ENCODE measurements at regions of chr20 and their contacts with region 1.

Region 1: DNA sequence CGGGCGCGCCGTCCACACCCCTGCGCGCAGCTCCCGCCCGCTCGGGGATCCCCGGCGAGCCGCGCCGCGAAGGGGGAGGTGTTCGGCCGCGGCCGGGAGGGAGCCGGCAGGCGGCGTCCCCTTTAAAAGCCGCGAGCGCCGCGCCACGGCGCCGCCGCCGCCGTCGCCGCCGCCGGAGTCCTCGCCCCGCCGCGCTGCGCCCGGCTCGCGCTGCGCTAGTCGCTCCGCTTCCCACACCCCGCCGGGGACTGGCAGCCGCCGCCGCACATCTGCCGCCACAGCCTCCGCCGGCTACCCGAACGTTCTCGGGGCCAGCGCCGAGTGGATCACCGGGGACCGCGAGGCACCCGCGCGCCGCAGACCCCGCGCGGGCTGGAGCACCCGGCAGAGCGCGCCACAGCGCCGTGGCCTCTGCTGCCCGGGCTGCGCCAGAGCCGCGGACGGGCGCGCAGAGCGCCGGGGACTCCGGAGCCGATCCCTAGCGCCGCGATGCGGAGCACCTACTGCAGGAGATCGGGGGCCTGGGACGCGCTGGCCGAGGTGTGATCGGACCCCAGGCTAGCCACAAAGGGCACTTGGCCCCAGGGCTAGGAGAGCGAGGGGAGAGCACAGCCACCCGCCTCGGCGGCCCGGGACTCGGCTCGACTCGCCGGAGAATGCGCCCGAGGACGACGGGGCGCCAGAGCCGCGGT is at the start of gene BMP2:
- DNase-seq: peak; percentile 69
- H3K4me3 ChIP-seq: peak within 1 kb of the TSS; percentile 78 to 93 (median 78)
- H3K27ac ChIP-seq: peak within 1 kb of the TSS; percentile 56
- H3K4me1 ChIP-seq: peaks cover 11% of the 10 kb centered on the region
- H3K27me3 ChIP-seq: no peaks in the 10 kb centered on the region
- CTCF ChIP-seq: no peak
- total RNA-seq, gene BMP2: 2.0 to 11.8 TPM

Region 2: GRCh38 chr20:6122873-6123648 is 644.6 kb before region 1 on chr20 and contains the start of gene FERMT1:
- CTCF ChIA-PET with region 1: no interaction called
- dilution Hi-C with region 1: no loop called
- in situ Hi-C with region 1: no loop called
- intact Hi-C with region 1: loop called (anchors 10 kb)
- DNase-seq: peak; percentile 97
- H3K4me3 ChIP-seq: peak within 1 kb of the TSS; percentile 74 to 91 (median 77)
- H3K27ac ChIP-seq: peak within 1 kb of the TSS; percentile 80
- H3K4me1 ChIP-seq: peaks cover 28% of the 10 kb centered on the region
- H3K27me3 ChIP-seq: no peaks in the 10 kb centered on the region
- CTCF ChIP-seq: peak in 1 of 2 donors; percentile 42
- total RNA-seq, gene FERMT1: 34.8 to 241 TPM

Region 3: DNA sequence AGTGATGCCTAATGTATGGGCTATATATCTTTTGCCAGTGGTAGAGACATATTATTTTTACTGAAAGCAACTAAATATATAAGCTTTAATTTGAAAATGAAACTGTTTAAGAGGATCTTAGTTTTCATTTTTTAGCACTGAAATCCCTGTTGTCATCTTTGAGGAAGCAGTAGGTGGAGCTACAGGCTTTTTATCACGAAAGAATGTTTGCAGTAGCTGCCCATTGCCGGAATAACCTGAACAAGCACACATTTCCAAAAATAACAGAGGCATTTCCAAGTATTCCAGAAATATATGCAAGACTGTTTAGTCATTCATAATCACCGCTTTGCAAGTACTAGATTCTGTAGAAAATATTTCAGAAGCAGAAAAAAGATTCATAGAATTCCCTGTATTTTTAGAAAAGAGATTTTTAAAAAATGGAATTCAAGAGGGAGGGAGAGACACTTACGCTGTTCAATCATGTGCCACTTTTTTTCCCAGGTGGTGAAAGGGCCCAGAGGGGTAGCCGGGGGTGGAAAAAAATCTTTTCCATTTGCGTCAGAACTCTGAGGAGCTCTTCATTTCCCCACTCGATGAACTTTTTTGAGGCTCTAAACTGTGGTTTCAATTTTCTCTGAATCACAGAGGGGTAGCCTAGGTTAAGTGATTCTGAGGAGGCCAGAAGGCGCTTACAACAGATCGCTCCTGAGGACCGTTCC is 502.3 kb before region 1 on chr20:
- CTCF ChIA-PET with region 1: no interaction called
- dilution Hi-C with region 1: no loop called
- in situ Hi-C with region 1: loop called in 1 of 2 experiments (anchors 25 kb)
- intact Hi-C with region 1: loop called (anchors 1 kb)
- DNase-seq: peak; percentile 41
- H3K4me3 ChIP-seq: peak overlapping the region in 2 of 3 experiments; percentile 17 to 35
- H3K27ac ChIP-seq: peak overlapping the region; percentile 10
- H3K4me1 ChIP-seq: peaks cover 9% of the 10 kb centered on the region
- H3K27me3 ChIP-seq: no peaks in the 10 kb centered on the region
- CTCF ChIP-seq: peak; percentile 65 to 70

Region 4: GRCh38 chr20:6828794-6829423 is 61.2 kb after region 1 on chr20:
- CTCF ChIA-PET with region 1: no interaction called
- dilution Hi-C with region 1: no loop called
- in situ Hi-C with region 1: no loop called
- intact Hi-C with region 1: loop called (anchors 2 kb)
- DNase-seq: peak; percentile 68
- H3K4me3 ChIP-seq: no peak overlapping the region
- H3K27ac ChIP-seq: peak overlapping the region; percentile 39
- H3K4me1 ChIP-seq: peaks cover 11% of the 10 kb centered on the region
- H3K27me3 ChIP-seq: no peaks in the 10 kb centered on the region
- CTCF ChIP-seq: peak; percentile 73 to 76

Region 5: DNA sequence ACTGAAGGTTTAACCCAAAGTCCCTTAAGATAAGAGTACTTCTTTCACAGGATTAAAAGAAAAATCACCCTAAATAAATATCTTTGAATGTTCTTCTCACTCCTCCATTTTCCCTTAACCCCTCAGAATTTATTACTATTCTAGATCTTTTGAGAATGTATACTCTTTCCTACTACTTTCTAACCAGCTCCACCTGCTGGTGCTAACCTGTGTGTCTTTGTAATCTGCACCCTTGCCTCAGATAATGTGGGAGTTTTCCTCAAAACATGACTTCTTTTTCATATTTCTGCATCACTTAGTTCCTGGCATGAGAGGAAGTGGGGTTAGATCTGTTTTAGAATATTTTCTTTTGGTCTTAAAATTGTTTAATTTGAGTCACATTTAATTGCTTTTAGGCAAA is 394.0 kb after region 1 on chr20:
- CTCF ChIA-PET with region 1: no interaction called
- dilution Hi-C with region 1: no loop called
- in situ Hi-C with region 1: no loop called
- intact Hi-C with region 1: loop called (anchors 2 kb)
- DNase-seq: peak; percentile 25
- H3K4me3 ChIP-seq: no peak overlapping the region
- H3K27ac ChIP-seq: no peak overlapping the region
- H3K4me1 ChIP-seq: peaks cover 3% of the 10 kb centered on the region
- H3K27me3 ChIP-seq: no peaks in the 10 kb centered on the region
- CTCF ChIP-seq: peak; percentile 65 to 68

Region 6: DNA sequence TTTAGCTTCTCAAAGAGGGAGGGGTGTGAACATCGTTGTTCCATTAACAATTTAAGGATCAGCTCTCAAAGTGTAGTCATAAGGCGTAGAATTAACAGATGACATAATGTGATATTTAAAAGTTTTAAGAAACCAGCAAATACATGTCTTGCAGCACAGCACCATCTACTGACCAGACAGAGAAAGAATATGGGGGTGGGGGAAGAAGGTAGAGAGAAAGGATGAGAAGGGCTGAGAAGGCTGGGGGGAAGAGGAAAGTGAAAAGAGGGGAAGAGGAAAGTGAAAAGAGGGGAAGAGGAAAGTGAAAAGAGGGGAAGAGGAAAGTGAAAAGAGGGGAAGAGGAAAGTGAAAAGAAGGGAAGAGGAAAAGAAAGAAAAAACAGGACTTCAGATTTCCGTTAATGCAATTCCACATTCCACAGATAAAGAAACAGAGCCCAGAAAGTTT is 1091.7 kb after region 1 on chr20:
- CTCF ChIA-PET with region 1: no interaction called
- dilution Hi-C with region 1: no loop called
- in situ Hi-C with region 1: loop called in 1 of 2 experiments (anchors 25 kb)
- intact Hi-C with region 1: loop called (anchors 2 kb)
- DNase-seq: peak; percentile 65
- H3K4me3 ChIP-seq: no peak overlapping the region
- H3K27ac ChIP-seq: peak overlapping the region; percentile 36
- H3K4me1 ChIP-seq: peaks cover 44% of the 10 kb centered on the region
- H3K27me3 ChIP-seq: no peaks in the 10 kb centered on the region
- CTCF ChIP-seq: peak; percentile 55 to 77